K562 (cell line): ENCODE measurements at regions of chr21 and their contacts with region 1.

Region 1: DNA sequence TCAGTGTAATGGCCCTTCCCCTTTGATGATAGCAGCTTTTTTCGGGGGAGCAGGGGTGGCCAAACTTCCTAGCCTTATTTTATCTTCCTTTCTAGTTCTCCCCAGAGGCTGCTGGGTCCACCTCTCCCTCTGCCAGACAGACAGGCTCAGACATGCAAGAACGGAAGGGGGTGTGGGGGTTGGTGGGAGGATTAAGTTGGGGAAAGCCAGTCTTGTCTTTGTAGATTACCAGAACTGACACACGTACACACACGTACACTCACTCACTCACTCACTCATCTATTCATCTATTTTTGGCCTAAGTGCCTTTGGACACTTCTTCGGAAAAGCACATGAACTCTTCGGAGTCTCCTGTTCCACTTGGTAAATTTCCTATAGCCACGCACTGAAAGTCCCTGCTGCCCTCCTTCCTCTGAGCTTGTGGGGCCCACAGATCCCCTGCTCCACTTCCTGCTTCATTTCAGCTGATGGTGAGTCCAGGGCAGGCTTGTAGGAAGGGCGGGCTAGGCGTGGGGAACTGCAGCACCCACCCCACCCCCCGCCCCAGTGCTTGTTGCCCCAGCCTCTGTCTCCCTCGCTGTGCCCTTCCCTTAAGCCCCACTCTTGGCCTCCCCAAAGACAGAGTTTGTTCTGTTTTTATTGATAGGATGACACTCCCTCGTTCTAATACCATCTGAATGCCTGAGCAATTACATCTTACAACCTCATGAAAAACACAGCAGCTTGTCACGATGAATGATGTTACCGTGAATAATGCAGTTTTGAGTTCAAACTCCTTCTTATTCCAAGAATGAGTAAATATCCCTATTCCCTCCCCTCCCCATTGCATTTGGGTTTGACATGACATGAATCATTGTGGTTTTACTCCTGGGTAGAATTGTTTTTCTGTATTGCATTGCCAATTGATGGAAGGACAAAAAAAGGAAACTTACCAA is 60.7 kb upstream of the ATP5PO start:
- DNase-seq: peak; percentile 86 to 87 (median 87)
- ATAC-seq: peak; percentile 81
- H3K4me3 ChIP-seq: peak overlapping the region; percentile 18
- H3K27ac ChIP-seq: peak overlapping the region; percentile 92
- H3K4me1 ChIP-seq: peaks cover 12 to 41% of the 10 kb centered on the region in 2 experiments; a peak in 4 of 5 replicates
- H3K27me3 ChIP-seq: no peaks in the 10 kb centered on the region
- CTCF ChIP-seq: no peak
- EP300 ChIP-seq: peak; percentile 56; the same call in 1 of the 2 replicates
- POLR2A ChIP-seq: peak; percentile 72
- RAD21 ChIP-seq: no peak

Region 2: DNA sequence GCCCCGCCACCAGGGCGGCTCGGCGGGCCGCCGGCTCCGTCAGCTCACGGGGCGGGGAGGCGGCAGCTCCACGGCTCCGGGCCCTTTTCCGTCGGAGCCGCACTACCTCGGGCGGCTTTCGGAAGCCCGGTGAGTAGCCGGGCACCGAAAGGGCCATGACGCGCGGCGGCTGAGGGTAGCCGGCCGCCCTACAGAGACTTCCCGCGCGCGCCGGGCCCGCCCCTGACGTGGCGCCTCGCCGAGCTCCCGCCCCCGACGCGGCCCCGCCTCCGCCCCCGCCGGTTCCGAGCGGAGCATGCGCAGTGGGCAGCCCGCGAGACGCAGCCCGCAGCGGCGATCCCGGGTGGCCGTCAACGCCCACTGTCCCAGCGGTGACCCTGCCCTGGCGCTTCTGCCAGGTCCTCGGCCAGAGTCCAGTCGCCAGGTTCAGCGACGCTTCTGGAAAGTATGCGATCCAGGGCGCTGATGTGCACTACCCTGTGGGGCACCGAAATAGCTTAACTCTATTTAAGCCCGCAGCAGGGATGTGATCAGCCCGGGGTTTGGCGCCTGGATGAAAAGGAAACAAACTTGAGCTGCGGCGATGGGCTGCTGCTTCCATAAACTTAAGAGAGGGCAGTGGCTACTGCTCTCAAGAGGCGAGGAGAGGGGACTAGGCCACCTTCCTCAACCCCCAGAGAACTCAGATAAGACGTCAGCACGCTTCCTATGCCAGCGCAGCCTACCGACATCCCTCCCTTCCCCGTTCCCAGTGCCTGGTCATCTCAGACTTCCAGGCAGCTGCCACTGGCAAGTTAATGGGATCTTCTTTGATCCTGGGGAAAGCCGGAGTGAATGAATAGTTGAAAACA is 387.6 kb before region 1 on chr21 and contains the start of gene DONSON:
- CTCF ChIA-PET with region 1: no interaction called
- POLR2A ChIA-PET with region 1: no interaction called
- in situ Hi-C with region 1: no loop called
- intact Hi-C with region 1: loop called (anchors 10 kb)
- DNase-seq: peak; percentile 93 to 100 (median 100)
- ATAC-seq: peak; percentile 92
- H3K4me3 ChIP-seq: peak within 1 kb of the TSS; percentile 89
- H3K27ac ChIP-seq: peak within 1 kb of the TSS; percentile 53
- H3K4me1 ChIP-seq: peaks cover 13 to 24% of the 10 kb centered on the region in 2 experiments; a peak in 4 of 5 replicates
- H3K27me3 ChIP-seq: no peaks in the 10 kb centered on the region
- CTCF ChIP-seq: no peak; a peak in 1 of 6 replicates
- EP300 ChIP-seq: no peak
- POLR2A ChIP-seq: peak; percentile 85
- RAD21 ChIP-seq: no peak
- polyA plus RNA-seq, gene DONSON: 26.7 to 30.6 TPM

Region 3: GRCh38 chr21:33931799-33932390 is 44.5 kb before region 1 on chr21:
- CTCF ChIA-PET with region 1: no interaction called
- POLR2A ChIA-PET with region 1: no interaction called
- in situ Hi-C with region 1: no loop called
- intact Hi-C with region 1: loop called (anchors 5 kb)
- DNase-seq: peak in 2 of 4 experiments; percentile 43 to 44
- ATAC-seq: peak; percentile 84
- H3K4me3 ChIP-seq: peak overlapping the region; percentile 67
- H3K27ac ChIP-seq: peak overlapping the region; percentile 92
- H3K4me1 ChIP-seq: peaks cover 0 to 6% of the 10 kb centered on the region in 2 experiments; a peak in 1 of 5 replicates
- H3K27me3 ChIP-seq: no peaks in the 10 kb centered on the region
- CTCF ChIP-seq: no peak
- EP300 ChIP-seq: no peak
- POLR2A ChIP-seq: no peak
- RAD21 ChIP-seq: no peak

Region 4: DNA sequence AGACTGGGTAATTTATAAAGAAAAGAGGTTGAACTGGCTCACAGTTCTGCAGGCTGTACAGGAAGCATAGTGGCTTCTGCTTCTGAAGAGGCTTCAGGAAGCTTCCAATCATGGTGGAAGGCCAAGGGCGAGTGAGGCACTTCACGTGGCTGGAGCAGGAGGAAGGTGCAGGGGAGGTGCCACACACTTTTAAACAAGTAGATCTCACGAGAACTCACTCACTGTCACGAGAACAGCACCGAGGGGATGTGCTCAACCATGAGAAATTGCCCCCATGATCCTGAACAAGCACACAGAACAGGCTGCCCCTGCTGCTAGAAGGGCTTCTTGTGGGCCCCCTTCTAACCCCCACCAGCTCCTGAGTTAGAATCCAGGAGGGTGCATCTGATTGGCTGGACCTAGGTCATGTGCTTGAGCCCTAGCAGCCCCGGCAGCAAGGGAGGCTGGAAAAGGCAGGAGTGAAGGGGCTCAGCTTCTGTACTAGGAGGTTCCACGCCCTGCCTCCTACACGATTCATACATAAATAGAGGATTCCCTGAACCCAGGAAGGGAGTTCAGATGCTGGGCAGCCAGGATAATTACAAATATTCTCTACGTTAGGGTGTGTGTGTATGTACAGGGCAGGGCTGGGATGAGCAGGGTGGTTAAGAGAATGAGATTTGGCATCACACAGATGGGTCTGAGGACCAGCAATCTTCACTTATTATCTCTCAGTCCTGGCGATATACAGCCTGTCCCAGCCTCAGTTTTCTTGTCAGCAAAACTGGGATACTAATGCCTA is 12.1 kb after region 1 on chr21:
- CTCF ChIA-PET with region 1: no interaction called
- POLR2A ChIA-PET with region 1: interaction called, 24 read pairs
- in situ Hi-C with region 1: no loop called
- intact Hi-C with region 1: no loop called
- DNase-seq: peak; percentile 47 to 73 (median 67)
- ATAC-seq: peak; percentile 82
- H3K4me3 ChIP-seq: no peak overlapping the region
- H3K27ac ChIP-seq: no peak overlapping the region
- H3K4me1 ChIP-seq: peaks cover 10 to 16% of the 10 kb centered on the region in 2 experiments
- H3K27me3 ChIP-seq: no peaks in the 10 kb centered on the region; a peak in 1 of 5 replicates
- CTCF ChIP-seq: no peak
- EP300 ChIP-seq: no peak
- POLR2A ChIP-seq: no peak
- RAD21 ChIP-seq: no peak

Region 5: GRCh38 chr21:34029743-34030528 is 53.6 kb after region 1 on chr21:
- CTCF ChIA-PET with region 1: no interaction called
- POLR2A ChIA-PET with region 1: no interaction called
- in situ Hi-C with region 1: no loop called
- intact Hi-C with region 1: loop called (anchors 5 kb)
- DNase-seq: peak; percentile 84 to 89 (median 85)
- ATAC-seq: peak; percentile 99
- H3K4me3 ChIP-seq: no peak overlapping the region
- H3K27ac ChIP-seq: no peak overlapping the region; the same call in 1 of the 3 replicates
- H3K4me1 ChIP-seq: peaks cover 0 to 14% of the 10 kb centered on the region in 2 experiments; a peak in 3 of 5 replicates
- H3K27me3 ChIP-seq: no peaks in the 10 kb centered on the region
- CTCF ChIP-seq: no peak
- EP300 ChIP-seq: no peak
- POLR2A ChIP-seq: no peak
- RAD21 ChIP-seq: 0 out of 4 replicates have a peak, but pooled peaks of 1 of the 2 experiments have one; percentile 1